PC-9 (cell line): ENCODE measurements at regions of chr4 and their contacts with region 1.

Region 1: DNA sequence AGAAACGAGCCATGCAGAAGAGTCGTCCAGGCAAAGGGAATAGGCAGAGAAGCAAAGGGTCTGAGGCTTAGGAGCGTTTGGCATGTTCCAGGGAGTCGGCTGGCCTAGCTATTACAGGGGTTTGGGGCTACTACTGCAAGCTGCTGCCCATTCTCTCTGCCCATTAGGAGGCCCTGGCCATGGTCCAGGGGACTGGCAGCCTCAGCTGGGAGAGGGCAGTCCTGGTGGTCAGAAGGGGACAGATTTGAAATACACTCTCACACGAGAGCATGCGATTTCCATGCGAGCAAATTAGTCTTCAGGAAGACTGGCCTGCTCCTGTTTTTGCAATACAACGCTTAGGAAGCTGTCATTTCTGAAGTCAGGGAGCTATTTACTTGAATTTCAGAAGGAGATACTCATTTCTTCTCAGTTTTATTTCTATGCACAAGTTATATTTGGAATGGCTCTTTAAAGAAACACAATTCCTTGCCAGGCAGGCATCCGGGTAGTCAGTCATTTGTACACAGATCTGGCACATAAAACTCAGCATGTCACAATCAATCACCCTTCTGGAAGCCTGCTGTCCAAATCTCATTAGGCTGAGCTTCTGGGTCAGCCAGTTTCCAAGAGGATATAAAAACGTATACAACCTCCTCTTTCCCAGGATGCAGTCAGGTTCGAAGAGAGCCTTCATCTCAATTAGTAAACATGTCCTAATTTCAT is 27.0 kb downstream of the PROM1 start:
- DNase-seq: no peak
- H3K4me3 ChIP-seq: no peak overlapping the region
- H3K27ac ChIP-seq: no peak overlapping the region
- H3K4me1 ChIP-seq: no peaks in the 10 kb centered on the region
- H3K27me3 ChIP-seq: no peaks in the 10 kb centered on the region
- CTCF ChIP-seq: no peak

Region 2: GRCh38 chr4:16019649-16020048 is 37.2 kb before region 1 on chr4:
- CTCF ChIA-PET with region 1: no interaction called
- POLR2A ChIA-PET with region 1: no interaction called
- intact Hi-C with region 1: loop called (anchors 1 kb)
- DNase-seq: no peak
- H3K4me3 ChIP-seq: no peak overlapping the region
- H3K27ac ChIP-seq: no peak overlapping the region
- H3K4me1 ChIP-seq: no peaks in the 10 kb centered on the region
- H3K27me3 ChIP-seq: no peaks in the 10 kb centered on the region
- CTCF ChIP-seq: no peak

Region 3: GRCh38 chr4:16351161-16351560 is 294.3 kb after region 1 on chr4:
- CTCF ChIA-PET with region 1: no interaction called
- POLR2A ChIA-PET with region 1: no interaction called
- intact Hi-C with region 1: no loop called
- DNase-seq: no peak
- H3K4me3 ChIP-seq: no peak overlapping the region
- H3K27ac ChIP-seq: no peak overlapping the region
- H3K4me1 ChIP-seq: no peaks in the 10 kb centered on the region
- H3K27me3 ChIP-seq: no peaks in the 10 kb centered on the region; the same call in 1 of the 2 replicates
- CTCF ChIP-seq: no peak